ENCODE measurements at regions of chr3 and their contacts with region 1.

Region 1: GRCh38 chr3:170961616-170962400 is 53.4 kb upstream of the EIF5A2 start:
- DNase-seq: peak in 3 of 4 experiments; percentile 15 to 52 (median 15)
- ATAC-seq: peak; percentile 51; the same call in 1 of the 3 replicates
- H3K4me3 ChIP-seq: no peak overlapping the region
- H3K27ac ChIP-seq: no peak overlapping the region
- H3K4me1 ChIP-seq: no peaks in the 10 kb centered on the region
- H3K27me3 ChIP-seq: no peaks in the 10 kb centered on the region
- CTCF ChIP-seq: peak; percentile 29 to 78 (median 49); a peak in 4 of 6 replicates
- EP300 ChIP-seq: no peak
- POLR2A ChIP-seq: no peak
- RAD21 ChIP-seq: peak; percentile 89 to 91

Region 2: GRCh38 chr3:170976190-170976519 is 14.3 kb after region 1 on chr3:
- CTCF ChIA-PET with region 1: no interaction called
- POLR2A ChIA-PET with region 1: interaction called, 12 read pairs
- in situ Hi-C with region 1: no loop called
- intact Hi-C with region 1: no loop called
- DNase-seq: no peak
- ATAC-seq: no peak
- H3K4me3 ChIP-seq: no peak overlapping the region
- H3K27ac ChIP-seq: no peak overlapping the region
- H3K4me1 ChIP-seq: no peaks in the 10 kb centered on the region; a peak in 1 of 5 replicates
- H3K27me3 ChIP-seq: peaks cover 12 to 16% of the 10 kb centered on the region in 2 experiments; a peak in 4 of 5 replicates
- CTCF ChIP-seq: no peak
- EP300 ChIP-seq: no peak
- POLR2A ChIP-seq: no peak
- RAD21 ChIP-seq: no peak

Region 3: DNA sequence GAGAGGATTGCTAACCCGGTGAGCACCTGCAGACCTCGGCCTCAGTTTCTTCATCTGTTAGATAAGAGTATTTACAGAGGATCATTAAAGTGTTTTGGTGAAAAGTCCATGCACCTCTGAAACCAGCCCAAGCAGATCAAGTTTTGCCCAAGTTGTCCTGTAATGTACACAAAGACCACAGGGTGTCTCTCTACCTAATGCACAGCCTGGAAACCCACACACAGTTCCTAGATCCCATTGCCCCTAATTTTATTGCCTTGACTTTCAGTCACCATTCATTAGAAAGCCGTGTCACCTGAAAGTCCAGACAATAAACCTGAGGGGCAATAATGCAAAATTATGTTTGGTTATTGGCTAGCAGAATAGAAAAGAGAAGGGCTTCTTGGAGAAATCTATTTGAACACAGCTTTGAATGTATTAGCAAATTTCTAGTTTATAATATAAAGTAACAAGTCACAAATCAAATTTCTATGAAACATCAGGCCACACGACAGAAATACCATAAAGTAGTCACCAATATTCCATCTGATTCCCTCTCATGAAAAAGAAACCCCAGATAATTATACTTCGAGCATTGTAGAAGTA is 226.0 kb after region 1 on chr3:
- CTCF ChIA-PET with region 1: interaction called, 8 read pairs
- POLR2A ChIA-PET with region 1: no interaction called
- in situ Hi-C with region 1: no loop called
- intact Hi-C with region 1: loop called (anchors 1 kb)
- DNase-seq: peak; percentile 32 to 63 (median 46)
- ATAC-seq: peak; percentile 62
- H3K4me3 ChIP-seq: no peak overlapping the region
- H3K27ac ChIP-seq: no peak overlapping the region
- H3K4me1 ChIP-seq: peaks cover 4 to 35% of the 10 kb centered on the region in 2 experiments
- H3K27me3 ChIP-seq: no peaks in the 10 kb centered on the region
- CTCF ChIP-seq: peak; percentile 67 to 71 (median 70)
- EP300 ChIP-seq: no peak
- POLR2A ChIP-seq: no peak
- RAD21 ChIP-seq: peak; percentile 67 to 81

Region 4: DNA sequence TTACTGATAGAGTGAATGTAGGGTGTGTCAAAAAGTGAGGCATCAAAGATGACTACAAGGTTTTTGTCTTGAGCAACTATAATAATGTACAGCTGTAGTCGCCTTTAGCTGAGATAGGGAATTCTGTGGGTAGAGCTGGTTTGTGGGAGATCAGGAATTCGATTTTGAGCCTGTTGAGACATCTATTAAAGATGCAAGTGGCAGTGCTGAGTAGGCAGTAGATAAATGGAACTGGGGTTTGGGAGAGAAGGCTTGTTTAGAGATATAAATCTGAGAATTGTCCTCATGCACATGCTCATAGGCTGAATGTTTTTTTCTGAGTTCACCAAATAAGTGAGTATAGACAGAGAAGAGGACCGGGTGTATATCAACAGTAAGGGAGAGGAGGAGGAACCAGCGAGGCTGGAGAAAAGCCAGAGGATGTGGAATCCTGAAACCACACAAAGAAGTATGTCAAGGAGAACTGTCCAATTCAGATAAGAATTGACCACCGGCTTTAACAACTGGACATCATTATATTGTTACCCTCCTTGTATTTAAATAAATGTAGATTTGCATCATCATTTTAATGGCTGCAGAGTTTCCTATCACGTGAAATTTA is 644.4 kb after region 1 on chr3:
- CTCF ChIA-PET with region 1: no interaction called
- POLR2A ChIA-PET with region 1: no interaction called
- in situ Hi-C with region 1: no loop called
- intact Hi-C with region 1: loop called (anchors 10 kb)
- DNase-seq: peak in 2 of 4 experiments; percentile 22 to 62
- ATAC-seq: peak; percentile 66
- H3K4me3 ChIP-seq: no peak overlapping the region
- H3K27ac ChIP-seq: no peak overlapping the region
- H3K4me1 ChIP-seq: peaks cover 0 to 4% of the 10 kb centered on the region in 2 experiments; a peak in 1 of 5 replicates
- H3K27me3 ChIP-seq: no peaks in the 10 kb centered on the region
- CTCF ChIP-seq: no peak
- EP300 ChIP-seq: no peak
- POLR2A ChIP-seq: no peak
- RAD21 ChIP-seq: no peak; a peak in 1 of 4 replicates

Region 5: DNA sequence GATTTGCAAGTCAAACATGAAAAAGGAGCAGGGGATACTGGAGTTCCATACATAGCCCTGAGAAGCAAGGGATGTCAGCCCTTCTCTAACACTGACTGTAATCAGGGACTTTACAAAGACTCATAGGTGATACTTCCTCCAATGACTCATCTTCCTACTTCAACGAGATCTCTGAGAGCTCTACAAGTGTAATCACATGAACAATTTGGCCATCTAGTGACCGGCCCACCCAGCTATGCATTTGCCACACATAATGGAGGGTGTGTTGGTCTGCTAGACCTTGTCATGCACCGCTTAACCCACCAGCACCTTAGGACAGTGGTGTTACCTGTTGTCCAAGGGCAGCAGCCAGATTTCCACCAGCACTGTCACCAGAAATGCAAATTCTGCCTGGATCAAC is 1673.8 kb after region 1 on chr3:
- CTCF ChIA-PET with region 1: no interaction called
- POLR2A ChIA-PET with region 1: no interaction called
- in situ Hi-C with region 1: loop called (anchors 25 kb)
- intact Hi-C with region 1: no loop called
- DNase-seq: no peak
- ATAC-seq: peak; percentile 43; the same call in 2 of the 3 replicates
- H3K4me3 ChIP-seq: no peak overlapping the region
- H3K27ac ChIP-seq: no peak overlapping the region
- H3K4me1 ChIP-seq: no peaks in the 10 kb centered on the region
- H3K27me3 ChIP-seq: no peaks in the 10 kb centered on the region
- CTCF ChIP-seq: no peak
- EP300 ChIP-seq: no peak
- POLR2A ChIP-seq: no peak
- RAD21 ChIP-seq: peak in 1 of 2 experiments; percentile 33; a peak in 1 of 4 replicates